Tibial artery (tissue), 4 donors: ENCODE measurements at regions of chr16 and their contacts with region 1.

Region 1: GRCh38 chr16:23452572-23453337 is at the start of gene COG7:
- DNase-seq: peak; percentile 84 to 92
- H3K4me3 ChIP-seq: peak within 1 kb of the TSS; percentile 80 to 92
- H3K27ac ChIP-seq: peak within 1 kb of the TSS; percentile 74 to 87
- H3K4me1 ChIP-seq: peaks cover 0 to 39% (median 17%) of the 10 kb centered on the region in 4 donors
- H3K27me3 ChIP-seq: no peaks in the 10 kb centered on the region
- CTCF ChIP-seq: peak in 1 of 2 experiments; percentile 5

Region 2: GRCh38 chr16:23398987-23399805 is 53.6 kb before region 1 on chr16:
- intact Hi-C with region 1: no loop called
- DNase-seq: peak in 1 of 2 donors; percentile 39
- H3K4me3 ChIP-seq: no peak overlapping the region
- H3K27ac ChIP-seq: no peak overlapping the region
- H3K4me1 ChIP-seq: no peaks in the 10 kb centered on the region
- H3K27me3 ChIP-seq: no peaks in the 10 kb centered on the region
- CTCF ChIP-seq: no peak

Region 3: GRCh38 chr16:23504451-23505179 is 51.9 kb after region 1 on chr16:
- intact Hi-C with region 1: loop called (anchors 5 kb)
- DNase-seq: peak; percentile 65 to 82
- H3K4me3 ChIP-seq: no peak overlapping the region
- H3K27ac ChIP-seq: peak overlapping the region; percentile 60 to 64
- H3K4me1 ChIP-seq: peaks cover 0 to 52% (median 29%) of the 10 kb centered on the region in 4 donors
- H3K27me3 ChIP-seq: no peaks in the 10 kb centered on the region
- CTCF ChIP-seq: no peak